Activated CD4-positive, alpha-beta memory T cell treated with anti-CD3 and anti-CD28 coated beads for 36 hours (primary cell): ENCODE measurements at regions of chr12 and their contacts with region 1.

Region 1: GRCh38 chr12:75058228-75058627 is 151.4 kb downstream of the KCNC2 start:
- DNase-seq: no peak
- H3K4me3 Mint-ChIP-seq: no peak overlapping the region
- H3K27ac Mint-ChIP-seq: no peak overlapping the region
- H3K4me1 Mint-ChIP-seq: no peaks in the 10 kb centered on the region
- H3K27me3 Mint-ChIP-seq: no peaks in the 10 kb centered on the region

Region 2: GRCh38 chr12:74689071-74689655 is 369.1 kb before region 1 on chr12:
- CTCF ChIA-PET with region 1: interaction called, 3 read pairs
- POLR2A ChIA-PET with region 1: no interaction called
- intact Hi-C with region 1: loop called (anchors 2 kb)
- DNase-seq: no peak
- H3K4me3 Mint-ChIP-seq: no peak overlapping the region
- H3K27ac Mint-ChIP-seq: no peak overlapping the region
- H3K4me1 Mint-ChIP-seq: no peaks in the 10 kb centered on the region
- H3K27me3 Mint-ChIP-seq: peaks cover 5% of the 10 kb centered on the region

Region 3: DNA sequence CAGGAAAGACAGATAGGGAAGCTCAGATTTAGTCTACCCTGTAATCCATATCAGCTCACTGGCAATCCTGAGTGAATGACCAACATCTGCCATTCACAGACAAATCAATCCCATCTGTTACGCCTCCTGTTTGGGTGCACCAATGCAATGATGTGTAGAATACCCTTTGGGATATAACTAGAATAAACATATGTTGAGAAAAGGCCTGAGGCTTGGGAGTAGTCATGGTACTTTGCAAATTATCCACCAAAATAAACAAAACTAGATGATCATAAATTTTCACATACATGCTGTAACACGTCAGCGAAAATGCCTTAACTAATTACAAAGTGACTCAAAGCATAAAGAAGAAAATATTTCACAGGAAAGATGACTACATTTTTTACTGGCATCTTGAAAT is 72.6 kb after region 1 on chr12:
- CTCF ChIA-PET with region 1: no interaction called
- POLR2A ChIA-PET with region 1: no interaction called
- intact Hi-C with region 1: no loop called
- DNase-seq: no peak
- H3K4me3 Mint-ChIP-seq: no peak overlapping the region
- H3K27ac Mint-ChIP-seq: no peak overlapping the region
- H3K4me1 Mint-ChIP-seq: no peaks in the 10 kb centered on the region
- H3K27me3 Mint-ChIP-seq: no peaks in the 10 kb centered on the region